ENCODE measurements at regions of chr19 and their contacts with region 1.

Region 1: GRCh38 chr19:57559404-57560025 is at the start of gene ZNF550:
- DNase-seq: peak; percentile 84
- H3K4me3 Mint-ChIP-seq: peak within 1 kb of the TSS; percentile 98
- H3K27ac Mint-ChIP-seq: peak within 1 kb of the TSS; percentile 88
- H3K4me1 Mint-ChIP-seq: peaks cover 28% of the 10 kb centered on the region
- H3K27me3 Mint-ChIP-seq: no peaks in the 10 kb centered on the region
- total RNA-seq, gene ZNF550: 7.2 and 7.5 TPM in 2 replicates

Region 2: DNA sequence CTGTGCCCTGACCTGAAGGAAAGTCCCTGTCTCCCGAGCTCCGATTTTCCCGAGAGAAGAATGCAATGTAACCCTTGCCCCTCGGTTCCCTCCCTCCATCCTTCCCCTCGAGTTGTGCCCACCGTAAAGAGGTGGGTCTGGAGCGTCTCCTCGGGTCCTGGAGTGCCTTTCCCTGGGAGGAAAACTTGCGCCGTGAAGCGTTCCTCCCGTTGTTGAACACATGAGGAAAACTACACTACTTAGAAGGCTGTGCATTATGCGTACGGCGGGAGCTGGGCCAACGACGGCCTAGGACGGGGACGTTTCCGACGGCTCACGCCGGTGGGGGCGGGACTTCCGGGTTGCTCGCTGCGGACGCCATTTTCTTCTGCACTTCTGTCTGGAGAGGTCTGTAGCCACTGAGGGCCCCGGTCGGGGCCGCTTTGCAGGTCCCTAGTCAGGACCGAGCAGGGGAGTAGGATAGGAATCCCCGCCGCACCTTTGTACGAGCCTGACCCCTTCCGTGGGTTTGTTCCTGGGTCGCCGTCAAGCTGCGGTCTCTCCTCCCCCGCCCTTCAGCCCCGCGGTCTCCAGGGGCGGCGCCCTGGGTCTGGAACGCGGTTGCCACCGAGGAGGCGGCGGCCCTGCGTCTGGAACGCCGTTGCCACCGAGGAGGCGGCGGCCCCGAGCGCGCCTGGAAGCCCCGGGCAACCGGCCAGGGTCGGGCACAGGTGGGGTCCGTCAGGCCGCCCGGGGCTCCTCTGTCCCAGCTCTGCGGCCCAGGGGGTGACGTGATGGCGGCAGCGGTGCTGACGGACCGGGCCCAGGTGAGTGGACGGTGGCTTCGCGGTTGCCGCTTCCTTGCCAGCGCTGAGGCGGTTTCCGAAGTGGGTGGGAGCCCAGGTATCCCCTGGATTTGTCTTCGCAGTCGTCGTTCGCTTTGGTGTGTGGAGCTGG is 368.1 kb before region 1 on chr19 and contains the start of gene ZNF264:
- intact Hi-C with region 1: loop called (anchors 1 kb)
- DNase-seq: peak; percentile 86
- H3K4me3 Mint-ChIP-seq: peak within 1 kb of the TSS; percentile 94
- H3K27ac Mint-ChIP-seq: peak within 1 kb of the TSS; percentile 85
- H3K4me1 Mint-ChIP-seq: peaks cover 24% of the 10 kb centered on the region
- H3K27me3 Mint-ChIP-seq: no peaks in the 10 kb centered on the region
- total RNA-seq, gene ZNF264: 16.1 and 18.3 TPM in 2 replicates

Region 3: GRCh38 chr19:57527136-57527881 is 32.2 kb before region 1 on chr19 and contains the start of gene ZNF549:
- intact Hi-C with region 1: loop called (anchors 1 kb)
- DNase-seq: peak; percentile 85
- H3K4me3 Mint-ChIP-seq: peak within 1 kb of the TSS; percentile 93
- H3K27ac Mint-ChIP-seq: peak within 1 kb of the TSS; percentile 76
- H3K4me1 Mint-ChIP-seq: peaks cover 20% of the 10 kb centered on the region
- H3K27me3 Mint-ChIP-seq: peaks cover 2% of the 10 kb centered on the region
- total RNA-seq, gene ZNF549: 3.6 and 4.2 TPM in 2 replicates

Region 4: GRCh38 chr19:57599761-57600383 is 40.4 kb after region 1 on chr19 and contains the start of gene ZNF530:
- intact Hi-C with region 1: loop called (anchors 1 kb)
- DNase-seq: peak; percentile 78
- H3K4me3 Mint-ChIP-seq: peak within 1 kb of the TSS; percentile 85
- H3K27ac Mint-ChIP-seq: peak within 1 kb of the TSS; percentile 58
- H3K4me1 Mint-ChIP-seq: peaks cover 16% of the 10 kb centered on the region
- H3K27me3 Mint-ChIP-seq: no peaks in the 10 kb centered on the region
- total RNA-seq, gene ZNF530: 5.4 and 7.3 TPM in 2 replicates

Region 5: DNA sequence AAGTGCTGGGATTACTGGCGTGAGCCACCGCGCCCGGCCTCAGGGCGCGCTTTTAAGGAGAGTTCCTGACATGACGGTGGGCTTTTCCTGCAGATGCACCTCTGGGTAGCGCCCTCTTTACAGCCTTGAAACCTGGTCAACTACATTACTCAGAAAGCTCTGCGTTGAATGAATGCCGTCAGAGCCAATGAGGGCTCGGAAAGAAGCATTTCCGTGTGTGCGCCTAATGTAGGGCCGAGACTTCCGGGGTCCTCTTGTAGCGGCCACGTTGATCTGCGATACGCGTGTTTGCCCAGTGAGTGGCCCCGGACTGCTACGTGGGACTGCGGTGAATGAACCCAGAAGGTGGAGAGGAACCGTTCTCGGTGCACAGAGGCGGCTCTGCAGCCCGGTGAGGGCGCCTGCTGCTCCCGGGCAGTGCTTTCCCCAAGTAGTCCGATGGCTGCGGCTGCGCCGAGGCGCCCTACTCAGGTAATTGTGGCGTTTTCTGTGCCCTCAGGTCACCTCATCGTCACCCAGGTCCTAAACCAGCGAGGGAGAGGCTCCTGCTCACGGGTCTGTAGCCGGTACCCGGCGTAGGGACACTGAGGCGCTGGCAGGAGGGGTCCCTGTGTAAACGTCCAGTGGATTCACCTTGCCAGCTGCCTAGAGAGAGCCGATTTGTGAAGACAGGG is 260.1 kb after region 1 on chr19:
- intact Hi-C with region 1: no loop called
- DNase-seq: peak; percentile 76
- H3K4me3 Mint-ChIP-seq: peak overlapping the region; percentile 99
- H3K27ac Mint-ChIP-seq: peak overlapping the region; percentile 98
- H3K4me1 Mint-ChIP-seq: peaks cover 50% of the 10 kb centered on the region
- H3K27me3 Mint-ChIP-seq: no peaks in the 10 kb centered on the region

Measured in activated T-helper 1 cell treated with anti-CD3 and anti-CD28 coated beads, Interleukin-12 subunit alpha, Interleukin-12 subunit beta, Interleukin-2, Interleukin-4 antibody, amounts not matched to agents 30 ng/mL and 10 ng/mL and 1 ng/mL, durations not matched to agents 14 hours and 24 hours and 36 hours (primary cell).